Sigmoid colon (tissue), 7 donors: ENCODE measurements at regions of chr14 and their contacts with region 1.

Region 1: GRCh38 chr14:99879401-99880295 is 86.4 kb downstream of the EML1 start:
- DNase-seq: no peak
- H3K4me3 ChIP-seq: no peak overlapping the region
- H3K27ac ChIP-seq: peak overlapping the region; percentile 62 to 82 (median 70)
- H3K4me1 ChIP-seq: peaks cover 0 to 37% (median 32%) of the 10 kb centered on the region in 4 donors
- H3K27me3 ChIP-seq: no peaks in the 10 kb centered on the region
- CTCF ChIP-seq: no peak
- EP300 ChIP-seq: no peak
- POLR2A ChIP-seq: no peak

Region 2: GRCh38 chr14:99320105-99320572 is 559.5 kb before region 1 on chr14:
- intact Hi-C with region 1: no loop called
- DNase-seq: no peak
- H3K4me3 ChIP-seq: no peak overlapping the region
- H3K27ac ChIP-seq: no peak overlapping the region
- H3K4me1 ChIP-seq: no peaks in the 10 kb centered on the region
- H3K27me3 ChIP-seq: peaks cover 0 to 11% (median 0%) of the 10 kb centered on the region in 3 donors
- CTCF ChIP-seq: peak in 2 of 4 experiments; percentile 32 to 56
- EP300 ChIP-seq: no peak
- POLR2A ChIP-seq: no peak

Region 3: GRCh38 chr14:99809360-99809759 is 70.3 kb before region 1 on chr14:
- intact Hi-C with region 1: loop called (anchors 5 kb)
- DNase-seq: peak; percentile 95
- H3K4me3 ChIP-seq: no peak overlapping the region
- H3K27ac ChIP-seq: peak overlapping the region; percentile 75 to 84 (median 80)
- H3K4me1 ChIP-seq: peaks cover 0 to 78% (median 63%) of the 10 kb centered on the region in 4 donors
- H3K27me3 ChIP-seq: no peaks in the 10 kb centered on the region
- CTCF ChIP-seq: no peak
- EP300 ChIP-seq: peak in 2 of 4 donors; percentile 34 to 44
- POLR2A ChIP-seq: no peak